Heart right ventricle (tissue), 16 donors: ENCODE measurements at regions of chr9 and their contacts with region 1.

Region 1: GRCh38 chr9:85142968-85143367 is 473.4 kb downstream of the NTRK2 start:
- DNase-seq: no peak
- ATAC-seq: peak in 2 of 8 donors; percentile 16 to 24
- H3K4me3 ChIP-seq: no peak overlapping the region
- H3K27ac ChIP-seq: no peak overlapping the region
- H3K4me1 ChIP-seq: no peaks in the 10 kb centered on the region
- H3K27me3 ChIP-seq: peaks cover 0 to 3% (median 0%) of the 10 kb centered on the region in 7 donors
- CTCF ChIP-seq: peak in 7 of 9 donors; percentile 39 to 61 (median 48)

Region 2: GRCh38 chr9:84397151-84397728 is 745.7 kb before region 1 on chr9:
- intact Hi-C with region 1: loop called in 7 of 10 experiments (anchors 5 to 10 kb)
- DNase-seq: peak; percentile 31 to 53
- ATAC-seq: peak; percentile 71 to 85 (median 76)
- H3K4me3 ChIP-seq: no peak overlapping the region
- H3K27ac ChIP-seq: no peak overlapping the region
- H3K4me1 ChIP-seq: peaks cover 0 to 8% (median 0%) of the 10 kb centered on the region in 9 donors
- H3K27me3 ChIP-seq: peaks cover 0 to 32% (median 10%) of the 10 kb centered on the region in 7 donors
- CTCF ChIP-seq: peak; percentile 82 to 98 (median 96)

Region 3: GRCh38 chr9:84404095-84404686 is 738.8 kb before region 1 on chr9:
- intact Hi-C with region 1: loop called in 7 of 10 experiments (anchors 5 to 10 kb)
- DNase-seq: no peak
- ATAC-seq: no peak
- H3K4me3 ChIP-seq: no peak overlapping the region
- H3K27ac ChIP-seq: no peak overlapping the region
- H3K4me1 ChIP-seq: no peaks in the 10 kb centered on the region
- H3K27me3 ChIP-seq: peaks cover 0 to 4% (median 0%) of the 10 kb centered on the region in 7 donors
- CTCF ChIP-seq: peak; percentile 33 to 69 (median 58)

Region 4: GRCh38 chr9:84697509-84698114 is 445.4 kb before region 1 on chr9:
- intact Hi-C with region 1: loop called in 5 of 10 experiments (anchors 5 to 10 kb)
- DNase-seq: peak; percentile 67 to 74
- ATAC-seq: peak; percentile 45 to 92 (median 82)
- H3K4me3 ChIP-seq: no peak overlapping the region
- H3K27ac ChIP-seq: no peak overlapping the region
- H3K4me1 ChIP-seq: peaks cover 0 to 8% (median 0%) of the 10 kb centered on the region in 9 donors
- H3K27me3 ChIP-seq: peaks cover 0 to 4% (median 0%) of the 10 kb centered on the region in 7 donors
- CTCF ChIP-seq: peak; percentile 44 to 82 (median 73)

Region 5: DNA sequence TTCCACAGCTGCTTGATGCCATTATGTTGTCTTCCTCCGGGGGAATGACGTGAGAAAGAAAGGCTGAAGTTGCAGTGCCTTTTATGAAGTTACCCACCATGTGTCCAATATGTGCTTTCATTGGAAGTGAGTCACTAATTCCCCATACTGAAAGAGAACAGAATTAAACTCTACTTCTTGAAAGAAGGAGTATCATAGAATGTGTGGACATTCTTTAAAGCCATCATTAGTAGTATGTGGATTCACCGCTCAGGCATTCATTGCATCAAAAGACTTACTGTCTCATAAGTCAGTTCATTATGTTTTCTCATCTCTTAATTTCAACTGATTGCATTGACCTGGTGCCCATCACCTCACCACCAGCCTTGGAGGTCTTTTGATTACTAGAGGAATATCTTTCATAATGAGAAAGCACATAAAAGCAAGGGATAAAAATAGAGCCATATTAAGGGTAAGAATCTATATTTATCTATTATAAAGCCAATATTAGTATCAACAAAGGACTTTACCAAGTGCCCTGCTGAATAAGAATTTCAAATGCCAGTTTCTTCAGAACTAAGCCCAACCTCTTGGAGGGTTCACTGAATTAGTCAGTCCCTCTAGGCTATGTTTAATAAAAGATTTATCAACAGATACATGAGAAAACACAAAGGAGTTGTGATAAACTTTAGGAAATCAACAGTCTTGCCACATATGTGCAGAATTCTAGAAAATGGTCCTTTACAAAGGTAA is 42.7 kb after region 1 on chr9:
- intact Hi-C with region 1: no loop called
- DNase-seq: no peak
- ATAC-seq: no peak
- H3K4me3 ChIP-seq: no peak overlapping the region
- H3K27ac ChIP-seq: no peak overlapping the region
- H3K4me1 ChIP-seq: no peaks in the 10 kb centered on the region
- H3K27me3 ChIP-seq: peaks cover 0 to 5% (median 0%) of the 10 kb centered on the region in 7 donors
- CTCF ChIP-seq: no peak